ENCODE measurements at regions of chr5 and their contacts with region 1.

Region 1: GRCh38 chr5:43040287-43041098 is at the start of gene ANXA2R:
- DNase-seq: peak; percentile 86 to 97 (median 95)
- ATAC-seq: peak; percentile 59 to 71 (median 63)
- H3K4me3 ChIP-seq: peak within 1 kb of the TSS; percentile 82 to 99
- H3K4me3 Mint-ChIP-seq: peak within 1 kb of the TSS; percentile 93 to 100 (median 95)
- H3K27ac ChIP-seq: peak within 1 kb of the TSS; percentile 98
- H3K27ac Mint-ChIP-seq: peak within 1 kb of the TSS; percentile 98 to 99
- H3K4me1 ChIP-seq: peaks cover 15 to 67% of the 10 kb centered on the region in 2 experiments
- H3K4me1 Mint-ChIP-seq: peaks cover 48 to 61% (median 48%) of the 10 kb centered on the region in 3 donors
- H3K27me3 ChIP-seq: no peaks in the 10 kb centered on the region
- H3K27me3 Mint-ChIP-seq: no peaks in the 10 kb centered on the region
- total RNA-seq, gene ANXA2R: 47.8 to 64.1 (median 53.1) TPM

Region 2: DNA sequence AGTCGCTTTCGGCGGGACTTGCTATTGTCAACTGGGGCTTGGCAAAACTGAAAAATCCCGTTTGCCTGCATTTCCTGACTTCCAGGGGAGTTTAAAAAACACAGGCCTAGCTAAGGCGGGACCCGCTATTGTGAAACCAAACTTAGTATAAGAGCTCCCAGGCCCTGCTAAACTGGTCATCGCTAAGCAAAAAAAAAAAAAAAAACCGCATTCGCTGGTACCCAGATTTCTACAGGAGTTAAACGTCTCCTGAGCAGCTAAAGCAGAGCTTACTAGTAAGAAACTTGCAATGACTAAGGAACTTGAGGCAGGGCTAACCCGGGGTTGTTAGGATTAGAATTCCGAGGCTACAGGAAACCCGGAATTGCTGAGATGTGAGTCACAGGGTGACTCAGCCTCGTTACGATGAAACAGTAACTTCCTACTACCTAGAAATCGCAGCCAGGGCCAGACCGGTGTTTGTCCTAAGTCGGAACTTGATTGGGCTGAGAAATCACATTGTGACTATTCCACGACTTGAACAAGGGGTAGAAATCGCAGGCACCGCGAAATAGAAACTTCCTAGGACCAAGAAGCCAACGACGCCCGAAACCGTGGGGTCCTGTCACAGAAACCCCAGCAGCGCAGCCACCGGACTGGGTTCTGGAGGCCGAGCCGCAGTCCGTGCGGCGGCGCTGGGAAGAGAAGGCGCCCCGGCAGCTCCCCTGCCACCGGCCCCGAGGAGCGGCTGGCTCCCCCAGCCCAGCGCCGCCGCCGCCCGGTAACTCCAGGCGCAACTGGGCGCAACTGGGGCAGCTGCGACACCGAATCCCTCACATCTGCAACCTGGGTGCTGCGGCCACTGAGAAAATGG is 89.8 kb before region 1 on chr5:
- CTCF ChIA-PET with region 1: interaction called, 4 to 19 read pairs
- POLR2A ChIA-PET with region 1: interaction called, 6 to 29 read pairs
- DNase-seq: peak; percentile 17 to 80 (median 41)
- ATAC-seq: peak; percentile 17 to 58 (median 44)
- H3K4me3 ChIP-seq: peak overlapping the region; percentile 77 to 98
- H3K4me3 Mint-ChIP-seq: peak overlapping the region; percentile 96 to 98 (median 98)
- H3K27ac ChIP-seq: peak overlapping the region; percentile 99
- H3K27ac Mint-ChIP-seq: peak overlapping the region; percentile 100
- H3K4me1 ChIP-seq: peaks cover 15 to 46% of the 10 kb centered on the region in 2 experiments
- H3K4me1 Mint-ChIP-seq: peaks cover 34 to 45% (median 40%) of the 10 kb centered on the region in 3 donors
- H3K27me3 ChIP-seq: no peaks in the 10 kb centered on the region
- H3K27me3 Mint-ChIP-seq: no peaks in the 10 kb centered on the region

Region 3: GRCh38 chr5:42982107-42982622 is 58.3 kb before region 1 on chr5:
- CTCF ChIA-PET with region 1: no interaction called
- POLR2A ChIA-PET with region 1: interaction called in 1 of 2 experiments, 11 read pairs
- DNase-seq: no peak
- ATAC-seq: no peak
- H3K4me3 ChIP-seq: no peak overlapping the region
- H3K4me3 Mint-ChIP-seq: no peak overlapping the region
- H3K27ac ChIP-seq: no peak overlapping the region
- H3K27ac Mint-ChIP-seq: no peak overlapping the region
- H3K4me1 ChIP-seq: peaks cover 2 to 11% of the 10 kb centered on the region in 2 experiments
- H3K4me1 Mint-ChIP-seq: peaks cover 23 to 36% (median 34%) of the 10 kb centered on the region in 3 donors
- H3K27me3 ChIP-seq: no peaks in the 10 kb centered on the region
- H3K27me3 Mint-ChIP-seq: no peaks in the 10 kb centered on the region

Region 4: DNA sequence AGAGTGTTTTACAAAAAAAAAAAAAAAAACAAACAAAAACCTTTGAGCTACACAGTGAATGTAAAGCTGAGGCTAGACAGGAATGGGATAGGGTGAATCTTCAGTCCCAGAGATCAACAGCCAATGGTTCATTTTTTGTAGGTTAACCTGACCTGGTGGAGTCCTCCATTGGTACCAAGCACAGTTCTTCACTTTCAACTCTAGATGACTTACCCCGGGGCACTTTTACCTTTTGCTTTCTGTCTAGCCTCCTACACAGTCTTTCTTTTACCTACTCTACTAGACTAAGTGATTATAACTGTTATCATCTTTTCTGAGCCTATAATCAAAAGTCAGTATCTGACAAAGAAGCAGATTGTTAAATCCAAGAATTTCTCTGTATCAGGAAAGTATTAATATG is 51.3 kb before region 1 on chr5:
- CTCF ChIA-PET with region 1: interaction called, 5 to 30 read pairs
- POLR2A ChIA-PET with region 1: interaction called, 13 to 81 read pairs
- DNase-seq: peak in 1 of 35 experiments; percentile 46
- ATAC-seq: no peak
- H3K4me3 ChIP-seq: peak overlapping the region in 1 of 2 donors; percentile 83
- H3K4me3 Mint-ChIP-seq: peak overlapping the region; percentile 83 to 100 (median 100)
- H3K27ac ChIP-seq: peak overlapping the region; percentile 89
- H3K27ac Mint-ChIP-seq: peak overlapping the region; percentile 90 to 100
- H3K4me1 ChIP-seq: peaks cover 25 to 39% of the 10 kb centered on the region in 2 experiments
- H3K4me1 Mint-ChIP-seq: peaks cover 59 to 76% (median 65%) of the 10 kb centered on the region in 3 donors
- H3K27me3 ChIP-seq: no peaks in the 10 kb centered on the region
- H3K27me3 Mint-ChIP-seq: no peaks in the 10 kb centered on the region

Region 5: DNA sequence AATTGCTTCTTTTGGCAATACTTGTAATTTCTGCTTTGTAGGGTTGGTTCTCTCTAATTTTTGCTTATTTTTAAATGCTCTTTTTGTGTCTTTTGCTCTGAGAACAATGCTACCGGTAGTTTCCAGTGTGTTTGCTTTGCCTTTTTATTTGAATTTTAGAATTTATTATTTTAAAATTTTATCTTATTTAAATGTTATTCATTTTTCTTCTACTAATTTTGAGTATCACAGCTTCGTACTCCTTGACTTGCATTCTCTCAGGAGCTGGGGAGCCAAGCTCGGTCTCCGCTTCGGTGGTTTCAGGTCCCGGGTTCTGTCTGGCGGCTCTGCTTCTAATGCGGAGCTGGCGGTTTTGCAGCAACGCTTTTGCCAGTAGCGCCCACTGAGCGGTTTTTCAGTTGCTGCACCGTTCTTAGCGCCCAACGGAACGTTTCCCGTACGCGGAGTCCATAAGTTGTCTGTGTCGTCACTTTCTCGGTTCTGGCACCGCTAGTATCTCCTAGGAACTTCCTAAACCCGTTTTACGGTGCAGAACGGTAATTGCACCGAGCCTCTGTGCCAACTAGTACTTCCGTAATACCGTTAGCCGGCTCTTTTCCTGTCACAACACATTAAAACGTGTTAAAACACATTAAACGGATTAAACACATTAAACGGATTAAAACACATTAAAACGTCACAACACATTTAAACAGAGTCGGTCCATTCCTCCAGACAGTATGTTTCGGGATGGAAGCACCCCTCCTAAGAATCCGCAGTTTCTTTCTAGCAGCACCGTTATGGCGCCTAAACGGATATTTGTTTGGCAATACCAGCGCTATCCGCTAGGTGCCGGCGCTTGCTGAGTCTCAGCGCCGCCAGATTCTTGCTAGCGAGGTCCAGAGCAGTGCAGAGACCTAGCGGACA is 46.0 kb before region 1 on chr5:
- CTCF ChIA-PET with region 1: interaction called, 5 to 30 read pairs
- POLR2A ChIA-PET with region 1: interaction called, 13 to 81 read pairs
- DNase-seq: peak; percentile 73 to 91 (median 82)
- ATAC-seq: peak; percentile 62 to 72 (median 66)
- H3K4me3 ChIP-seq: peak overlapping the region; percentile 83 to 95
- H3K4me3 Mint-ChIP-seq: peak overlapping the region; percentile 99 to 100 (median 100)
- H3K27ac ChIP-seq: peak overlapping the region; percentile 89
- H3K27ac Mint-ChIP-seq: peak overlapping the region; percentile 100
- H3K4me1 ChIP-seq: peaks cover 22 to 32% of the 10 kb centered on the region in 2 experiments
- H3K4me1 Mint-ChIP-seq: peaks cover 29 to 37% (median 35%) of the 10 kb centered on the region in 3 donors
- H3K27me3 ChIP-seq: no peaks in the 10 kb centered on the region
- H3K27me3 Mint-ChIP-seq: no peaks in the 10 kb centered on the region

Region 6: DNA sequence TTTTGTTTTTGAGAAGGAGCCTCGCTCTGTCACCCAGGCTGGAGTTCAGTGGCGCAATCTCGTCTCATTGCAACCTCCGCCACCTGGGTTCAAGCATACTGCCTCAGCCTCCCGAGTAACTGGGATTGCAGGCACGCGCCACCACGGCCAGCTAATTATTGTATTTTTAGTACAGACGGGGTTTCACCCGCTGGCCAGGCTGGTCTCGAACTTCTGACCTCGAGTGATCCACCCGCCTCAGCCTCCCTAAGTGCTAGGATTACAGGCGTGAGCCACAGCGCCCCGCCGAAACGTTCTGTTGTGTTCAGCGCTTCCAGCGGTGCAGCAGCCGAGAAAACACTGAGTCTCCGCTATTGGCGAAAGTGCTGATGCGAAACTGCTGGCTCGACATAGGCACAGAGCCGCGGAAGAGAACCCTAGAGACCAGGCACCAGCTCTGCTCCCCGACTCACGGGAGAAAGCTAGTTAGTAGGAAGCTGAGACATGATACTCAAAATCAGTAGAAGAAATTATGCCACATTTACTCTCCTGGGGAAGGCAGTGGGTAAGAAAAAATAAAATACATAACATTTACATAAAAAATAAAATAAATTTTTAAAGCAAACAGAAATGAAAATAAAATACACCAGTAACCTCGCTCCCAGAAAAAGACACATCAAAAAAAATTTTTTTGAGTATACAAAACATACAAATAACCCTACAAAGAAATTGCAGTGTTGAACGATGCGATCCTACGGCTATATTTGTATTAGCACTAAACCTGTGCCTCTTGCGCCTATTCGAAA is 31.9 kb before region 1 on chr5:
- CTCF ChIA-PET with region 1: interaction called in 1 of 2 experiments, 37 read pairs
- POLR2A ChIA-PET with region 1: interaction called, 6 to 47 read pairs
- DNase-seq: peak; percentile 83 to 97 (median 90)
- ATAC-seq: peak; percentile 65 to 72 (median 71)
- H3K4me3 ChIP-seq: peak overlapping the region; percentile 54 to 97
- H3K4me3 Mint-ChIP-seq: peak overlapping the region; percentile 85 to 87 (median 85)
- H3K27ac ChIP-seq: peak overlapping the region; percentile 87
- H3K27ac Mint-ChIP-seq: peak overlapping the region; percentile 96 to 99
- H3K4me1 ChIP-seq: peaks cover 22 to 34% of the 10 kb centered on the region in 2 experiments
- H3K4me1 Mint-ChIP-seq: peaks cover 40 to 51% (median 42%) of the 10 kb centered on the region in 3 donors
- H3K27me3 ChIP-seq: no peaks in the 10 kb centered on the region
- H3K27me3 Mint-ChIP-seq: no peaks in the 10 kb centered on the region

Region 7: GRCh38 chr5:43019614-43020293 is 20.7 kb before region 1 on chr5:
- CTCF ChIA-PET with region 1: interaction called, 15 to 71 read pairs
- POLR2A ChIA-PET with region 1: interaction called, 16 to 99 read pairs
- DNase-seq: peak; percentile 65 to 95 (median 86)
- ATAC-seq: peak; percentile 67 to 74 (median 70)
- H3K4me3 ChIP-seq: peak overlapping the region; percentile 70 to 92
- H3K4me3 Mint-ChIP-seq: peak overlapping the region; percentile 90 to 98 (median 98)
- H3K27ac ChIP-seq: peak overlapping the region; percentile 98
- H3K27ac Mint-ChIP-seq: peak overlapping the region; percentile 98 to 100
- H3K4me1 ChIP-seq: peaks cover 31 to 35% of the 10 kb centered on the region in 2 experiments
- H3K4me1 Mint-ChIP-seq: peaks cover 41 to 46% (median 42%) of the 10 kb centered on the region in 3 donors
- H3K27me3 ChIP-seq: no peaks in the 10 kb centered on the region
- H3K27me3 Mint-ChIP-seq: no peaks in the 10 kb centered on the region